Heart right ventricle (tissue), 16 donors: ENCODE measurements at regions of chr11 and their contacts with region 1.

Region 1: GRCh38 chr11:64652586-64653387 is 61.8 kb downstream of the SLC22A12 start:
- DNase-seq: peak; percentile 80
- ATAC-seq: peak; percentile 64 to 84 (median 76)
- H3K4me3 ChIP-seq: no peak overlapping the region
- H3K27ac ChIP-seq: no peak overlapping the region
- H3K4me1 ChIP-seq: peaks cover 0 to 41% (median 5%) of the 10 kb centered on the region in 9 donors
- H3K27me3 ChIP-seq: peaks cover 0 to 14% (median 2%) of the 10 kb centered on the region in 7 donors
- CTCF ChIP-seq: peak; percentile 83 to 93 (median 86)

Region 2: GRCh38 chr11:63802637-63803414 is 850.0 kb before region 1 on chr11:
- intact Hi-C with region 1: no loop called
- DNase-seq: no peak
- ATAC-seq: no peak
- H3K4me3 ChIP-seq: no peak overlapping the region
- H3K27ac ChIP-seq: no peak overlapping the region
- H3K4me1 ChIP-seq: peaks cover 0 to 13% (median 0%) of the 10 kb centered on the region in 9 donors
- H3K27me3 ChIP-seq: no peaks in the 10 kb centered on the region
- CTCF ChIP-seq: no peak

Region 3: GRCh38 chr11:64358907-64359711 is 293.7 kb before region 1 on chr11 and contains the start of gene RPS6KA4:
- intact Hi-C with region 1: loop called in 1 of 10 experiments (anchors 10 kb)
- DNase-seq: peak; percentile 51 to 73
- ATAC-seq: peak; percentile 69 to 95 (median 80)
- H3K4me3 ChIP-seq: peak within 1 kb of the TSS; percentile 64 to 99 (median 92)
- H3K27ac ChIP-seq: peak within 1 kb of the TSS; percentile 60 to 97 (median 93)
- H3K4me1 ChIP-seq: peaks cover 8 to 48% (median 36%) of the 10 kb centered on the region in 9 donors
- H3K27me3 ChIP-seq: no peaks in the 10 kb centered on the region
- CTCF ChIP-seq: peak in 1 of 9 donors; percentile 12
- total RNA-seq, gene RPS6KA4: 10.7 to 21.9 (median 12.8) TPM

Region 4: GRCh38 chr11:64448599-64449556 is 203.9 kb before region 1 on chr11:
- intact Hi-C with region 1: loop called in 9 of 10 experiments (anchors 1 to 10 kb)
- DNase-seq: peak; percentile 78 to 86
- ATAC-seq: peak; percentile 95 to 98 (median 96)
- H3K4me3 ChIP-seq: peak overlapping the region in 9 of 10 donors; percentile 20 to 46 (median 42)
- H3K27ac ChIP-seq: peak overlapping the region in 5 of 10 donors; percentile 5 to 83 (median 46)
- H3K4me1 ChIP-seq: peaks cover 9 to 32% (median 17%) of the 10 kb centered on the region in 9 donors
- H3K27me3 ChIP-seq: peaks cover 0 to 42% (median 25%) of the 10 kb centered on the region in 7 donors
- CTCF ChIP-seq: peak; percentile 79 to 93 (median 87)

Region 5: GRCh38 chr11:64553551-64554201 is 99.1 kb before region 1 on chr11:
- intact Hi-C with region 1: loop called in 4 of 10 experiments (anchors 1 kb)
- DNase-seq: peak; percentile 49 to 70
- ATAC-seq: peak; percentile 57 to 75 (median 68)
- H3K4me3 ChIP-seq: peak overlapping the region in 1 of 10 donors; percentile 3
- H3K27ac ChIP-seq: peak overlapping the region in 9 of 10 donors; percentile 52 to 83 (median 74)
- H3K4me1 ChIP-seq: peaks cover 6 to 26% (median 21%) of the 10 kb centered on the region in 9 donors
- H3K27me3 ChIP-seq: peaks cover 0 to under 1% (median 0%) of the 10 kb centered on the region in 7 donors
- CTCF ChIP-seq: peak in 8 of 9 donors; percentile 91 to 99 (median 98)

Region 6: GRCh38 chr11:64675450-64676260 is 22.9 kb after region 1 on chr11:
- intact Hi-C with region 1: no loop called
- DNase-seq: peak; percentile 80 to 87
- ATAC-seq: peak; percentile 95 to 99 (median 98)
- H3K4me3 ChIP-seq: no peak overlapping the region
- H3K27ac ChIP-seq: peak overlapping the region in 2 of 10 donors; percentile 12 to 25
- H3K4me1 ChIP-seq: peaks cover 7 to 26% (median 16%) of the 10 kb centered on the region in 9 donors
- H3K27me3 ChIP-seq: peaks cover 0 to 34% (median 6%) of the 10 kb centered on the region in 7 donors
- CTCF ChIP-seq: no peak